Colonic mucosa (tissue), 4 donors: ENCODE measurements at regions of chr17 and their contacts with region 1.

Region 1: GRCh38 chr17:2029911-2030778 is at the start of gene DPH1:
- DNase-seq: peak; percentile 92
- H3K4me3 ChIP-seq: peak within 1 kb of the TSS; percentile 100
- H3K27ac ChIP-seq: peak within 1 kb of the TSS; percentile 30
- H3K4me1 ChIP-seq: peaks cover 7% of the 10 kb centered on the region
- H3K27me3 ChIP-seq: peaks cover 26% of the 10 kb centered on the region
- CTCF ChIP-seq: no peak
- total RNA-seq, gene DPH1: 22.7 to 34.4 TPM

Region 2: DNA sequence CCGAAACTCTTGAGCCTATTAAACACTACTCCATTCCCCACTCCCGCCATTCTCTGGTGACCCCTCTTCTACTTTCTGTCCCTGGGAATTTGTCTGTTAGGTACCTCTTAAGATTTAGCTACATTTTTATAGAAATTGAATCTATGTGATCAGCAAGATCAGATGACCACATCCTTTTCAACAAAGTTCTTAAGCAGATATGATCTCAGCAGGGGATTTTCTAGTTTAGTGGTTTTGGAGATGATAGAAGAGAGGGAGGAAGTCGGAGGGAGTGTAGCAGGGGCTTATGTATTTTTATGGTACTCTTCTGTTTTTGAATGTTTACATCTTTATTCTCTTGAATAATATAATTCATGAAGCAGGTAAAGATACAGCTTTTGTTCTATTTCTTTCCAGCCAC is 159.6 kb before region 1 on chr17:
- intact Hi-C with region 1: no loop called
- DNase-seq: no peak
- H3K4me3 ChIP-seq: no peak overlapping the region
- H3K27ac ChIP-seq: no peak overlapping the region
- H3K4me1 ChIP-seq: no peaks in the 10 kb centered on the region
- H3K27me3 ChIP-seq: no peaks in the 10 kb centered on the region
- CTCF ChIP-seq: no peak

Region 3: GRCh38 chr17:1908699-1909309 is 121.3 kb before region 1 on chr17:
- intact Hi-C with region 1: loop called (anchors 5 kb)
- DNase-seq: peak; percentile 59
- H3K4me3 ChIP-seq: no peak overlapping the region
- H3K27ac ChIP-seq: no peak overlapping the region
- H3K4me1 ChIP-seq: no peaks in the 10 kb centered on the region
- H3K27me3 ChIP-seq: peaks cover 51% of the 10 kb centered on the region
- CTCF ChIP-seq: peak; percentile 53